ENCODE measurements at regions of chr1 and their contacts with region 1.

Region 1: GRCh38 chr1:116817582-116818064 is 63.4 kb downstream of the CD2 start:
- DNase-seq: peak; percentile 52 to 85 (median 70)
- ATAC-seq: peak; percentile 77 to 80
- H3K4me3 Mint-ChIP-seq: peak overlapping the region; percentile 6 to 76 (median 58)
- H3K27ac Mint-ChIP-seq: peak overlapping the region; percentile 6 to 89 (median 78)
- H3K4me1 Mint-ChIP-seq: peaks cover 11 to 30% (median 24%) of the 10 kb centered on the region in 4 donors
- H3K27me3 Mint-ChIP-seq: no peaks in the 10 kb centered on the region

Region 2: GRCh38 chr1:116737020-116737854 is 80.4 kb before region 1 on chr1:
- POLR2A ChIA-PET with region 1: interaction called, 55 read pairs
- DNase-seq: peak; percentile 46 to 87 (median 78)
- ATAC-seq: peak; percentile 57 to 62
- H3K4me3 Mint-ChIP-seq: peak overlapping the region; percentile 63 to 82 (median 76)
- H3K27ac Mint-ChIP-seq: peak overlapping the region; percentile 94 to 99 (median 98)
- H3K4me1 Mint-ChIP-seq: peaks cover 33 to 48% (median 45%) of the 10 kb centered on the region in 4 donors
- H3K27me3 Mint-ChIP-seq: no peaks in the 10 kb centered on the region

Region 3: GRCh38 chr1:116754198-116754977 is 63.2 kb before region 1 on chr1 and contains the start of gene CD2:
- POLR2A ChIA-PET with region 1: interaction called, 12 read pairs
- DNase-seq: peak in 9 of 10 donors; percentile 31 to 76 (median 58)
- ATAC-seq: peak; percentile 84 to 90
- H3K4me3 Mint-ChIP-seq: peak within 1 kb of the TSS; percentile 92 to 100 (median 98)
- H3K27ac Mint-ChIP-seq: peak within 1 kb of the TSS; percentile 96 to 99 (median 98)
- H3K4me1 Mint-ChIP-seq: peaks cover 22 to 42% (median 35%) of the 10 kb centered on the region in 4 donors
- H3K27me3 Mint-ChIP-seq: no peaks in the 10 kb centered on the region
- polyA plus RNA-seq, gene CD2: 197 to 240 (median 222) TPM

Region 4: GRCh38 chr1:116763787-116764465 is 53.7 kb before region 1 on chr1:
- POLR2A ChIA-PET with region 1: interaction called, 66 read pairs
- DNase-seq: peak in 4 of 10 donors; percentile 27 to 38 (median 32)
- ATAC-seq: peak; percentile 6 to 15
- H3K4me3 Mint-ChIP-seq: peak overlapping the region; percentile 68 to 91 (median 88)
- H3K27ac Mint-ChIP-seq: peak overlapping the region; percentile 97 to 99 (median 98)
- H3K4me1 Mint-ChIP-seq: peaks cover 58 to 98% (median 96%) of the 10 kb centered on the region in 4 donors
- H3K27me3 Mint-ChIP-seq: no peaks in the 10 kb centered on the region

Region 5: DNA sequence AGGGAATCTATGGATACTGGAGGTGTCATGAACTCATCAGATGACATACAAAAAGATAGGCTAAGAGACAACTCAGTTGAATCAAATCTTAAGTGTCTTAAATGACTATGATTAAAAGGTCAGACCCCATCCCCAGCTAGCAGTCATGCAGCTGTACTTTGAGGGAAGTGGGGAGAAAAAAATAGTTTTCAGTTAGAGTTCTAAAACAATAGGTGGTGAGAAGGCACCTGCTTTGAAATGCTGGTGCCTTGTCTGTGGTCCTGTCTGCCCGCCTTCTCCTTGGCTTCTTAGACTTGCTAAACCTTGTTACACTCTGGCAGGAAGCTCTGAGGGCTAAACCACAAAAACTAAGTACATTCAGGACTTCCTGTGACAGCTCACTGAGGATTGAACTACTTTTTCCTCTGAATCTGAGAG is 48.1 kb before region 1 on chr1:
- POLR2A ChIA-PET with region 1: interaction called, 66 read pairs
- DNase-seq: peak; percentile 29 to 91 (median 78)
- ATAC-seq: peak; percentile 85 to 91
- H3K4me3 Mint-ChIP-seq: peak overlapping the region; percentile 34 to 82 (median 74)
- H3K27ac Mint-ChIP-seq: peak overlapping the region; percentile 93 to 99 (median 98)
- H3K4me1 Mint-ChIP-seq: peaks cover 47 to 85% (median 84%) of the 10 kb centered on the region in 4 donors
- H3K27me3 Mint-ChIP-seq: no peaks in the 10 kb centered on the region

Region 6: GRCh38 chr1:116781034-116781433 is 36.6 kb before region 1 on chr1:
- POLR2A ChIA-PET with region 1: no interaction called
- DNase-seq: no peak
- ATAC-seq: no peak
- H3K4me3 Mint-ChIP-seq: no peak overlapping the region
- H3K27ac Mint-ChIP-seq: no peak overlapping the region
- H3K4me1 Mint-ChIP-seq: peaks cover 16 to 30% (median 22%) of the 10 kb centered on the region in 4 donors
- H3K27me3 Mint-ChIP-seq: no peaks in the 10 kb centered on the region

Region 7: GRCh38 chr1:116794804-116795481 is 22.7 kb before region 1 on chr1:
- POLR2A ChIA-PET with region 1: no interaction called
- DNase-seq: no peak
- ATAC-seq: peak in 1 of 2 donors; percentile 14
- H3K4me3 Mint-ChIP-seq: no peak overlapping the region
- H3K27ac Mint-ChIP-seq: peak overlapping the region in 6 of 10 donors; percentile 26 to 72 (median 43)
- H3K4me1 Mint-ChIP-seq: peaks cover 28 to 71% (median 53%) of the 10 kb centered on the region in 4 donors
- H3K27me3 Mint-ChIP-seq: no peaks in the 10 kb centered on the region

Region 8: DNA sequence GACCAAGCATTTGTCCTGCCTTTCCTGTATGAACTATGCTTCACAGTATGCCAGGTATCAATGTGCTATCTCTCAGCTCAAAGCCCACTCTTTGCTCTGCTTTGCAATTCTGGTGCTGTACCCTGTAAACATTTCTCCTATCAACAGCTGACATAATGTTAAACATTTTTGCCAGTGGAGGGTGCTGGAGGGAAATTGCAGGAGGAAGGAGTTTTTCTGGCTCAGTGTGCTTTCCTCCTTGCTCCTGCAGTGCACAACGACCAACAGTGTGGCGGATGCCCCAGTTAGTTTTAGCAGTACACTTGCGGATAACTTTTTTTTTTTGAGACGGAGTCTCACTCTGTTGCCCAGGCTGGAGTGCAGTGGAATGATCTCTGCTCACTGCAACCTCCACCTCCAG is 25.0 kb after region 1 on chr1:
- POLR2A ChIA-PET with region 1: no interaction called
- DNase-seq: no peak
- ATAC-seq: no peak
- H3K4me3 Mint-ChIP-seq: no peak overlapping the region
- H3K27ac Mint-ChIP-seq: no peak overlapping the region
- H3K4me1 Mint-ChIP-seq: no peaks in the 10 kb centered on the region
- H3K27me3 Mint-ChIP-seq: no peaks in the 10 kb centered on the region

Measured in naive thymus-derived CD8-positive, alpha-beta T cell (primary cell).